ENCODE measurements at regions of chr3 and their contacts with region 1.

Region 1: DNA sequence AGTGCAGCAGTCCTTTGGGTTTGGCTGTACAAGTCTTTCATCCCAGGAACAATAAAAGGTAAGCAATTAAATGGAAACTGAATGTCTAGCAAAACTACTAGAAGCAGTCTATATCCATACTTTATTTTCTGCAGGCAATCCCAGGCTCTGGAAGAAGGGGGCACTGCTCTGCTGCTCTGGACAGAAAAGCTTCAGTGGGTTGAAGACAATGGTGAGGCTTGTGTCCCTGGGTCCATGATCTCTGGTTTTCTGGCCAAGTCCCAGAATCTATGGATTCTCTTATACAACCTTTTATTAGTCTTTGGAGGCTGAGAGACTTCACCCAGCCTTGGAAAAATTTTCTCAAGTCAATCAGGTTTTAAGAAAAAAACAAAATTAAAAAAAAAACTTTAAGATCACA is 35.6 kb downstream of the SCAP start:
- DNase-seq: no peak
- ATAC-seq: no peak
- H3K4me3 ChIP-seq: no peak overlapping the region
- H3K27ac ChIP-seq: no peak overlapping the region
- H3K4me1 ChIP-seq: peaks cover 14% of the 10 kb centered on the region
- H3K27me3 ChIP-seq: no peaks in the 10 kb centered on the region
- CTCF ChIP-seq: peak; percentile 40
- POLR2A ChIP-seq: no peak
- RAD21 ChIP-seq: peak; percentile 46

Region 2: DNA sequence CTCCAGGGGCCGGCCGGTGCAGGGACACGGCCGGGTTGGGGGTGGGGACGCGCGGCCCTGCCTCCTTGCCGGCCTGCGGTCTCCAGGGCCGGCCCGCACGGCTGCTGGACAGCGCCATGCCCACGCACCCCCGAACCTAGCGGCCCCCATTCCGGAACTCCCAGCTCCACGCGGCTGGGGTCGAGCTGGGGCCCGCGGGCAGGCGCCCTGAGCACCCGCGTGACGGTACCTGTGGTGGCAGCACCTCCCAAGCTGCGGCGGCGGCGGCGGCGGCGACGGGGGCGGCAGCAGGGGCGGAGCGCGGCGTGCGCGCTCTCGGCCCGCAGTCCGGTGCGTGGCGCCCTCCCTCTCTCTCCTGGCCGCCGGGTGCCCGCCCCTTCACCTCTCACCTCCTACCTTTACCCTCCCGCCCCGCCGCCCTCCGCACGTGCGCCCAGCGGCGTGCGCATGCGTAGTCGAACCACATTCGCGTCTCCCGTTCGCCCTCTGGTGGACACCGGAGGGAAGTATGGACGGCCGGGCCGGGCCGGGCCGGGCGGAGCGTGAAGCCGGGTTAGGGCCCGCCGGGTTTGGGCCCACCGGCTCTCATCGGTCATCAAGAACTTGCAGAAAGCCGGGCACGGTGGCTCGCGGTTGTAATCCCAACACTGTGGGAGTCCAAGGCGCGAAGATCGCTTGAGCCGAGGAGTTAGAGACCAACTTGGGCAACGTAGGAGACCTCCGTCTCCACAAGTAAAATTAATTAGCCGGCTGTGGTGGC is 35.6 kb after region 1 on chr3 and contains the start of gene SCAP:
- CTCF ChIA-PET with region 1: no interaction called
- POLR2A ChIA-PET with region 1: no interaction called
- dilution Hi-C with region 1: no loop called
- in situ Hi-C with region 1: no loop called
- intact Hi-C with region 1: loop called (anchors 1 kb)
- DNase-seq: peak; percentile 64
- ATAC-seq: peak; percentile 94
- H3K4me3 ChIP-seq: peak within 1 kb of the TSS; percentile 85
- H3K27ac ChIP-seq: peak within 1 kb of the TSS; percentile 83
- H3K4me1 ChIP-seq: peaks cover 2% of the 10 kb centered on the region; the same call in 1 of the 2 replicates
- H3K27me3 ChIP-seq: no peaks in the 10 kb centered on the region
- CTCF ChIP-seq: peak; percentile 87
- POLR2A ChIP-seq: no peak
- RAD21 ChIP-seq: peak; percentile 51
- total RNA-seq, gene SCAP: 30.8 and 34.6 TPM in 2 replicates

Region 3: DNA sequence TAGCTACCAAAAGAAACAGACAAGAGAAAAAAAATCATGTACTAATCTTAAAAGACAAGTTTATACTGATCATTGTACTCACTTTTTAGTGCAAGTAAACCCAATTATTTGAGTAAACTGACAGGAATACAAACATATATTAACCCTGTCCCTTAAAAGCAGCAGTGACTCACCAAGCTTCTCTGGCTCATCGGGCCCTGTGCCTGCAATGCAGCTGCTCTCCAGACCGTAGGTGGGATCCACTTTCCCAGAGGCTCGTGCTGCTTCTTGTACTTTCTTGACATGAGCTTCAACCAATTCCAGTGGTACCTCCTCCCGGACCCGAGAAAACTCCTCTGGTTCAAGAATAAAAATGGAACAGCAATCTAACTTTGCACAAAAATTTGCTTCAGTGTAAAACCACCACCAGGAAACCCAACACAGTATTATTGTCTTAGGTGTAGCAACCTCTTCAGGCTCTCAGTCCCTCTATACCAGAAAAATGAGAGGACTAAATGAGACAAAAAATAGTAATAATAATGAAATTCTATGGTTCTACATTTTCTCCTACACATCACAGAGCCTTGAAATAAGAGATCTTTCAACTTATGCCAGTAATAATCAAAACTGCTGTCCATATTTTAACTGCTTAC is 221.1 kb after region 1 on chr3:
- CTCF ChIA-PET with region 1: no interaction called
- POLR2A ChIA-PET with region 1: no interaction called
- dilution Hi-C with region 1: no loop called
- in situ Hi-C with region 1: no loop called
- intact Hi-C with region 1: loop called (anchors 2 kb)
- DNase-seq: peak; percentile 85
- ATAC-seq: peak; percentile 98
- H3K4me3 ChIP-seq: no peak overlapping the region
- H3K27ac ChIP-seq: no peak overlapping the region
- H3K4me1 ChIP-seq: no peaks in the 10 kb centered on the region; the same call in 1 of the 2 replicates
- H3K27me3 ChIP-seq: no peaks in the 10 kb centered on the region
- CTCF ChIP-seq: no peak
- POLR2A ChIP-seq: no peak
- RAD21 ChIP-seq: no peak

Region 4: GRCh38 chr3:47762233-47762632 is 322.1 kb after region 1 on chr3:
- CTCF ChIA-PET with region 1: no interaction called
- POLR2A ChIA-PET with region 1: no interaction called
- dilution Hi-C with region 1: no loop called
- in situ Hi-C with region 1: no loop called
- intact Hi-C with region 1: no loop called
- DNase-seq: peak; percentile 28
- ATAC-seq: no peak
- H3K4me3 ChIP-seq: no peak overlapping the region
- H3K27ac ChIP-seq: no peak overlapping the region
- H3K4me1 ChIP-seq: no peaks in the 10 kb centered on the region
- H3K27me3 ChIP-seq: no peaks in the 10 kb centered on the region
- CTCF ChIP-seq: no peak
- POLR2A ChIP-seq: no peak
- RAD21 ChIP-seq: no peak

Measured in IMR-90 (cell line).